Stomach (tissue), 19 donors: ENCODE measurements at regions of chr10 and their contacts with region 1.

Region 1: GRCh38 chr10:102729029-102730026 is 14.4 kb upstream of the WBP1L start:
- DNase-seq: peak; percentile 89 to 93
- H3K4me3 ChIP-seq: no peak overlapping the region
- H3K27ac ChIP-seq: peak overlapping the region in 1 of 5 donors; percentile 50
- H3K4me1 ChIP-seq: peaks cover 0 to 10% (median 8%) of the 10 kb centered on the region in 4 donors
- H3K27me3 ChIP-seq: no peaks in the 10 kb centered on the region
- CTCF ChIP-seq: peak in 6 of 7 experiments; percentile 50 to 94 (median 89)
- EP300 ChIP-seq: no peak
- POLR2A ChIP-seq: no peak

Region 2: GRCh38 chr10:102808380-102808779 is 79.1 kb after region 1 on chr10:
- intact Hi-C with region 1: no loop called
- DNase-seq: no peak
- H3K4me3 ChIP-seq: no peak overlapping the region
- H3K27ac ChIP-seq: no peak overlapping the region
- H3K4me1 ChIP-seq: peaks cover 9 to 32% (median 17%) of the 10 kb centered on the region in 4 donors
- H3K27me3 ChIP-seq: no peaks in the 10 kb centered on the region
- CTCF ChIP-seq: no peak
- EP300 ChIP-seq: no peak
- POLR2A ChIP-seq: no peak

Region 3: DNA sequence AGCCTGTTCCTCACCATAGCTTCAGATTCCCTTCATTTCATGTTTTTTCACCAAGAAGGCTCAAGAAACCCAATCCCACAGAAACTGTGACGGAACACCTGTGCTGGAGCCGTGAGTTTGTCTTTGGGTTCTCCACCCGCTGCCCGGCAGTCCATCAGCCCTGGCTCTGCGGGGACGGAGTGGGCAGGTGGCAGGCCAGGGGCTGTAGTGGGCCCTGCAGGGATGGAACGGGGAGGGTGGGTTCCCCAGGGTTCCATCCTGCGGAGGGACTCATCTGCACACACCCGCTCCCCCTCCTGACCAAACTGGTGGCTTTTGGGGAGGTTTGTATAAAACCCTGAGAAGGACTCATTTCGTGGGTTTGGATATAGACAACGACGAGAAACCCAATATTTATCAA is 92.9 kb after region 1 on chr10:
- intact Hi-C with region 1: loop called (anchors 10 kb)
- DNase-seq: no peak
- H3K4me3 ChIP-seq: no peak overlapping the region
- H3K27ac ChIP-seq: no peak overlapping the region
- H3K4me1 ChIP-seq: peaks cover 0 to 7% (median 2%) of the 10 kb centered on the region in 4 donors
- H3K27me3 ChIP-seq: no peaks in the 10 kb centered on the region
- CTCF ChIP-seq: no peak
- EP300 ChIP-seq: no peak
- POLR2A ChIP-seq: no peak

Region 4: GRCh38 chr10:102904346-102904745 is 175.0 kb after region 1 on chr10:
- intact Hi-C with region 1: loop called (anchors 5 kb)
- DNase-seq: no peak
- H3K4me3 ChIP-seq: no peak overlapping the region
- H3K27ac ChIP-seq: no peak overlapping the region
- H3K4me1 ChIP-seq: no peaks in the 10 kb centered on the region
- H3K27me3 ChIP-seq: no peaks in the 10 kb centered on the region
- CTCF ChIP-seq: no peak
- EP300 ChIP-seq: no peak
- POLR2A ChIP-seq: no peak